Endothelial cell of umbilical vein (primary cell): ENCODE measurements at regions of chr18 and their contacts with region 1.

Region 1: DNA sequence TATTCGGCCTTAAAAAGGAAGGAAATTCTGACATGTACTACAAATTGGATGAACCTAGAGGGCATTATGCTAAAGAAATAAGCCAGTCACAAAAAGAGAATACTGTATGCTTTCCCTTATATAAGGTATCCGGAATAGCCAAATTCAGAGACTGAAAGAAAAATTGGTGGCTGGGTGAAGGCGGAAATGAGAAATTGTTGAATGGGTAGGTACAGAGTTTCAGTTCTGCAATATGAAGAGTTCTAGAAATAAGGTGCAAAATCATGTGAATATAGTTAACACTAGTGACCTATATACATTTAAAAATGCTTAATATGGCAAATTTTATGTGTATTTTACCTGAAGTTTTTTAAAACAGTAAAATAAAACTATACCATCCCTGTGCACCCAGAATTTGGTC is 43.1 kb downstream of the RMP24 start:
- DNase-seq: no peak
- H3K4me3 ChIP-seq: no peak overlapping the region
- H3K27ac ChIP-seq: no peak overlapping the region
- H3K4me1 ChIP-seq: no peaks in the 10 kb centered on the region
- H3K27me3 ChIP-seq: no peaks in the 10 kb centered on the region
- CTCF ChIP-seq: no peak
- POLR2A ChIP-seq: no peak

Region 2: DNA sequence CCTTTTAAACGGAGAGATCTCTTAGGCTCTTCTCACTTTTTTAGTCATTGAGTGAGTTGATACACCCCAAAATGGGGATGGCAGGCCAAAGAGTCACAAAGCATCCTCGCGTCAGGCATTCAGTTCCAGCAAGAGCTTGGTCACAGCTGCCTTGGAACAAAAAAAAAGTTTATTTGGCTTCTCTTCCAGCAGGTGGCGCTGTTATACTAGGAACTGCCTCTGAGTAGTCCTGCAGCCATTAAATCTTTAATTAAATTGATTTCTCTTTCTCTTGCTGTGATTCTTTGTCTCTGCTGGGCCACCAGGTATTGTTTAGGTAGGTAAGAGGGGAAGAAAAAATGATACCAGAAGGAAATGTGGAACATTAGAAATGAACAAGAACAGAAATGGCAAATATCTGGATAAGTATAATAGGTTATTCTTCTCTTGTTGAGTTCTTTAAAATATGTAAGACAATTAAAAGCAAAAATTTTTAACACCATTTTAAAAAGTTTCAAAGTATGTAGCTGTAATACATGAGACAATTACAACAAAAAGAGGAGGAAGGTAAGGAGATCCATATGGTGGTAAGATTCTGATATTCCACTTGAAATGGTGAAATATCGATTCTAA is 259.0 kb before region 1 on chr18:
- CTCF ChIA-PET with region 1: interaction called, 13 read pairs
- POLR2A ChIA-PET with region 1: no interaction called
- dilution Hi-C with region 1: no loop called
- intact Hi-C with region 1: loop called (anchors 1 kb)
- DNase-seq: peak; percentile 63
- H3K4me3 ChIP-seq: no peak overlapping the region
- H3K27ac ChIP-seq: no peak overlapping the region
- H3K4me1 ChIP-seq: no peaks in the 10 kb centered on the region
- H3K27me3 ChIP-seq: peaks cover 3 to 6% of the 10 kb centered on the region in 2 experiments
- CTCF ChIP-seq: peak; percentile 58 to 75
- POLR2A ChIP-seq: no peak

Region 3: GRCh38 chr18:35803551-35803950 is 212.1 kb before region 1 on chr18:
- CTCF ChIA-PET with region 1: no interaction called
- POLR2A ChIA-PET with region 1: no interaction called
- dilution Hi-C with region 1: no loop called
- intact Hi-C with region 1: no loop called
- DNase-seq: no peak
- H3K4me3 ChIP-seq: no peak overlapping the region
- H3K27ac ChIP-seq: no peak overlapping the region
- H3K4me1 ChIP-seq: no peaks in the 10 kb centered on the region
- H3K27me3 ChIP-seq: peaks cover 10 to 42% of the 10 kb centered on the region in 2 experiments
- CTCF ChIP-seq: no peak
- POLR2A ChIP-seq: no peak

Region 4: GRCh38 chr18:36035253-36035652 is 19.6 kb after region 1 on chr18:
- CTCF ChIA-PET with region 1: interaction called, 13 read pairs
- POLR2A ChIA-PET with region 1: no interaction called
- dilution Hi-C with region 1: no loop called
- intact Hi-C with region 1: no loop called
- DNase-seq: peak; percentile 94
- H3K4me3 ChIP-seq: no peak overlapping the region
- H3K27ac ChIP-seq: no peak overlapping the region
- H3K4me1 ChIP-seq: peaks cover 22% of the 10 kb centered on the region
- H3K27me3 ChIP-seq: no peaks in the 10 kb centered on the region
- CTCF ChIP-seq: no peak
- POLR2A ChIP-seq: peak; percentile 71

Region 5: GRCh38 chr18:36086186-36086585 is 70.6 kb after region 1 on chr18:
- CTCF ChIA-PET with region 1: interaction called, 11 read pairs
- POLR2A ChIA-PET with region 1: no interaction called
- dilution Hi-C with region 1: no loop called
- intact Hi-C with region 1: no loop called
- DNase-seq: no peak
- H3K4me3 ChIP-seq: no peak overlapping the region
- H3K27ac ChIP-seq: no peak overlapping the region
- H3K4me1 ChIP-seq: no peaks in the 10 kb centered on the region
- H3K27me3 ChIP-seq: peaks cover 0 to 3% of the 10 kb centered on the region in 2 experiments
- CTCF ChIP-seq: no peak
- POLR2A ChIP-seq: no peak

Region 6: DNA sequence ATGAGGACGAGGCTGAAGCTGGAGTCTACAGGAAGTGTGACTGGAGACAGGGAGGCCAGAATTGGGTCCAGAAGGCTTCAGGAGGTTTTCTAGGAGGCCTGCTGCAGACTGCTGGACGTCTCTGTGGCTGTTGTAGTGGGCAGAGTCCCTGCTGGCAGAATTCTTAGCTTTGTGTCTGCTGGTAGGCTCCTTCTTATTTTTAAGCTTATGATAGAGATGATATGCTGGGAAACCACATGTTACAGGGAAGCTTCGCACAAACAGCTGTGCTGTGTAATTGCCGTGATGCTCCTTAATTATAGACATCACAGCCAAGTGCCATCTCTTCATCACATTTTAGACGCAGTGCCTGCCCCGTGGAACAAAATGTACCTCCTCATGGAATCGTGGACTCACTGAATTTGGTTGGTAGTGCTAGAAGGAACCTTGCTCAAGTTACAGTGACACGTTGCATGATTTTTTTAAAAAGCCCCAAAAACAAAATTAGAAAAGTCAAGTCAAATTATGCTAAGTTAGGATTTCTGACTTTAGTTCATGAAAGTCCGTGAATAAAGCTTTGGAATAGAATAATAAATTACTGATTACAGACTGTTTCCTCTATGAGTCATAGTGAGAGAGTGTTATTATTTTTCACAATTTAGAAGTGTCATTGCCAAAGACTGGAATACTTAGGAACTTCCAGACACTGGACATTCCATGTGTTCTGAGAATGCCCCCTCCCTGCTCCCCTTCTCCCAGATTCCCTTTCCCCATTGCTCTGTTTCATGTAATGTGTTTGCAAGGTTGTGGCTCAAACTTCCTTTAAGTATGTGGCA is 426.0 kb after region 1 on chr18:
- CTCF ChIA-PET with region 1: no interaction called
- POLR2A ChIA-PET with region 1: no interaction called
- dilution Hi-C with region 1: no loop called
- intact Hi-C with region 1: no loop called
- DNase-seq: peak; percentile 34
- H3K4me3 ChIP-seq: no peak overlapping the region
- H3K27ac ChIP-seq: no peak overlapping the region
- H3K4me1 ChIP-seq: no peaks in the 10 kb centered on the region
- H3K27me3 ChIP-seq: no peaks in the 10 kb centered on the region
- CTCF ChIP-seq: no peak
- POLR2A ChIP-seq: no peak

Region 7: GRCh38 chr18:36572135-36572856 is 556.7 kb after region 1 on chr18:
- CTCF ChIA-PET with region 1: interaction called, 4 read pairs
- POLR2A ChIA-PET with region 1: no interaction called
- dilution Hi-C with region 1: no loop called
- intact Hi-C with region 1: loop called (anchors 10 kb)
- DNase-seq: peak; percentile 44
- H3K4me3 ChIP-seq: no peak overlapping the region
- H3K27ac ChIP-seq: no peak overlapping the region
- H3K4me1 ChIP-seq: no peaks in the 10 kb centered on the region
- H3K27me3 ChIP-seq: peaks cover 2 to 4% of the 10 kb centered on the region in 2 experiments
- CTCF ChIP-seq: peak; percentile 39 to 43
- POLR2A ChIP-seq: no peak